Right cardiac atrium (tissue), 5 donors: ENCODE measurements at regions of chr22 and their contacts with region 1.

Region 1: DNA sequence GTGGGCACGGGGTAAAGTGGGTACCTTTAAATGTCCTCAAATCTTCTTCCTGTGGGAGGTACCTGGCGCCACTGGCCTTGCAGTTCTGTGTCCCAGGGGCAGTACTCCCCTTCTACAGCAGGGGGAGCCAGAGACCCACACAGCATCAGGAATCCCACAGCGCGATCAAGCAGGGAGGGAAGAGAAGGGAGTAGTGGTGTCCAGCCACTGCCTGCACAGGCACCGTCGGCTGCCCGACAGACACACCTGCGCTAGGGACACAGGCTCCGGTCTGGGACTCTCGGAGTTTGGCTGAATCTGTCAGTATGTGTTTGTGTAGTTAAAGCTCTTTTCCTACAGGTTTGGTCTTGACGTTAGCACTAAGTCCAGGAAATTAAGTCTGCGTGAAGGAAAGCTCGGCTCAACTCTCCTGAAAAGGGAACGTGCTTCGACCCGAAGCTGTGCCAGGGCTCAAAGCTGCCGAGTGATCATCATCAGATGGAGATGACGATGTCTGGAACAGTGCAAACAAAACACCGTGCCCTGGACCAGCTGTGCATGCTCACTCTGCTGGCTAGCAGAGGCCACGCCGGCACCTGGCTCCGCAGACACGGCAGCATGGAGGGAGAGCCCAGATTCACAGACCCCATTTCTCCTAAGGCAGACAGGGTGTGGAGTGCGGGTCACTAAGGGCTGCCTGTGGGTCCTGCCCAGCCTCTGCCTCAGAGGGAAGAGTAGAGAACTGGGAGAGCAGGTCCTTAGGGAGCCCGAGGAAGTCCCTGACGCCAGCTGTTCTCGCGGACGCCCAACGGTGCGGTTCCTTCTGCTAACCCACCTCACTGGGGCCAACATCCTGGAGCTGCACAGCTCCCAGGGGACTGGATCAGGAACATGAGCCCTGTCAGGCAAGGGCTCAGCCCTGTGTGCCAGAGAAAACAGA is 56.0 kb upstream of the BID start:
- DNase-seq: peak; percentile 81 to 94 (median 90)
- ATAC-seq: peak; percentile 78 to 79
- H3K4me3 ChIP-seq: no peak overlapping the region
- H3K27ac ChIP-seq: no peak overlapping the region
- H3K4me1 ChIP-seq: peaks cover 4% of the 10 kb centered on the region
- H3K27me3 ChIP-seq: no peaks in the 10 kb centered on the region

Region 2: DNA sequence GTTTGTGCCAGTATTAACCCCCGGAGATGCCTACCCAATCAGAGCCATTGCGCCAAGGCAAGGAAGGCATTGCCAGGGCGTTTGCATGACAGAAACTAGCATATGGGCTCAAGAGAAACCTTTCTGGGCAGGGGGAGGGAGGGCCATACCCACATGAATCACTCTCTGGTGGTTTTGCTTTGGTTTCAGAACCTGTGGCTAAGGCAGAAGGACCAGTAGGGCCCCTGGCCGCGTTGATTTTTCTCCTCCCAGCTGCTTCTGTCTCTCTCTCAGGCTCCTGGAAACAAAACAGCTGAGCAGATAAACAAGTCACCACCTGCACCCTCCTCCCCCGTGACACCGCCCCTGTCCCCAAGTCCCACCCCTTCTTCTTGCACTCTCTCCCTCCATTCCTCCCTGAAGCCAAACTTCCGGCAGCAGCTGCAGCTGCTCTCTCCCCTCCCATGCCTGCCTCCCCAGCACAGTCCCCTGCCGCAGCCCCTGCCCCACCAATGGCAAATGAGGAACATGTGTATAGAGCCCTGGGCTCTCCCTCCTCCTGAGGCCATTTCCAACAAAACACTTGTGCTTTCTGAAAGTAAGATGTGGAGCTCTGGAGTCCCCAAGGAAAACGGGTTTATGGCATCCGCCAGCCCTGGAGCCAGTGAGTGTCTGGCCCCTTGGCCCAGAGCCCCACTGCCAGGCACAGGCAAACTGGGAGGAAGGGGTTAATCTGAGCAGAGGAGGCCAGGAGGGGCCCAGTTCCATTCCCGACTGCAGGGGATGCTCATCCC is 572.1 kb before region 1 on chr22:
- intact Hi-C with region 1: no loop called
- DNase-seq: peak in 1 of 3 donors; percentile 65
- ATAC-seq: peak; percentile 49 to 73
- H3K4me3 ChIP-seq: no peak overlapping the region
- H3K27ac ChIP-seq: no peak overlapping the region
- H3K4me1 ChIP-seq: no peaks in the 10 kb centered on the region
- H3K27me3 ChIP-seq: no peaks in the 10 kb centered on the region

Region 3: GRCh38 chr22:17891481-17892167 is 61.3 kb after region 1 on chr22:
- intact Hi-C with region 1: loop called (anchors 2 to 10 kb)
- DNase-seq: peak; percentile 45 to 84 (median 80)
- ATAC-seq: peak; percentile 61 to 79
- H3K4me3 ChIP-seq: no peak overlapping the region
- H3K27ac ChIP-seq: peak overlapping the region; percentile 82
- H3K4me1 ChIP-seq: no peaks in the 10 kb centered on the region
- H3K27me3 ChIP-seq: no peaks in the 10 kb centered on the region

Region 4: DNA sequence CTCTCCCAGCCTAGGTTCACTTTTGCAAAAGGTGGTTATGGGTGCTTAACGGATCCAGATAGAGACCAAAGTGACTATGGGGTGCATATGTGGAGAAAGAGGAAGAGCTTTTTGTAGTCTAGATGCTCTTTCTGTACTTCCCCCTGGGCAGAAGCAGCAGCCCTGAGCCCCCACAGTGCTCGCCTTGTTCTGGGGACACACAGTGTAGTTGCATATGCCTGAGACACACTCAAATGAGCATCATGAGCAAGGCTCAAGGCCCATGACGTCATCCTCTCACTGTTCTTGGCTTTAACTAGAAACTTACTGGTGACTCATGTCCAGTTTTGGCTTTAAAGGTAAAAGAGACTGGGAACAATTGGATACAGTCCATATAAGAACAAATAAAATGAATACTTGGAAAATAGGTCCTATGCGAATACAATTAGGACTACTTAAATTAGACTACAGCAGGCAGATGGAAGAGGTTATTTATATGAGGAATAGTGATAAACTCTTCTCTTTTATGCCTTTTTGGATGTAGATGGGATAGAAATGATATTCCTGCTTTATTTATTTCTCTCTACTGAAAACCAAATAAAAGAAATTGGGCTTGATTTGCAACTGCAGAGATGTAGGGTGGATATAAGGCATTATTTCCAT is 227.4 kb after region 1 on chr22:
- intact Hi-C with region 1: no loop called
- DNase-seq: peak in 2 of 3 donors; percentile 83 to 85
- ATAC-seq: peak; percentile 81 to 84
- H3K4me3 ChIP-seq: no peak overlapping the region
- H3K27ac ChIP-seq: no peak overlapping the region
- H3K4me1 ChIP-seq: peaks cover 8% of the 10 kb centered on the region
- H3K27me3 ChIP-seq: no peaks in the 10 kb centered on the region

Region 5: DNA sequence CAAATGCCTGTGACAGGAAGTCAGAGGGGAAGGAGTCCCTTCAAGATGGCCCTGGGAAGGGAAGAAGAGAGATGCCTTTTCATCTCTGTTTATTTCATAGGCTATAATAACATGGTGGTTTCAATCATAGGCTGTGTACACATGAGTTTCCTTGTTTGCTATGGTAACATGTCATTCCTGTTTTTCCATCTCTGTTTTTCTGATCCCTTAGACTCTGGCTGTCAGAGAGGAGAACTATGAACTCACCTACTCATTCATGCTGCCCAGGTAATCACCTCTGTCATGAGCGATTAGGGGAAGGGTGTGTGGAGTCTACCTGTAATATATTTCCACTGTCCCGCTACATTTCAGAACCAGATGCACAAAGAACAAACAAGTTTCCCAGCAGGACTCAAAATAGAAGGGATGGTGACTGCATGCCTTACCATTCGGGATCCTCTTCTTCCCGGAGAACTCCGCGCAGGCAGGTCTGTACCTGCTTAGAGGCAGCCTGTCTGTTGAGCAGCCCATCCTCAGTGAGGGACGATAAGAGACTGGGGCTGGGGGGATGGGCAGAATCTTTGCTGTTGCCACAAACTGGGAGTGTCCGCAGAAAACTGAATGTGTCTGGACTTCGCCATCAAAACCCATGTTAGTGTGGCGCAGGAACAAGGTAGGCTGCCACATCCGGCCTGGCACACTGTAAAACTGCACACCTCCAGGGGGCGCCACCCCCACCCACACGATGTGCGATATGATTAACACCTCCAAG is 240.4 kb after region 1 on chr22:
- intact Hi-C with region 1: loop called in 2 of 4 experiments (anchors 5 kb)
- DNase-seq: peak in 1 of 3 donors; percentile 26
- ATAC-seq: no peak
- H3K4me3 ChIP-seq: no peak overlapping the region
- H3K27ac ChIP-seq: no peak overlapping the region
- H3K4me1 ChIP-seq: no peaks in the 10 kb centered on the region
- H3K27me3 ChIP-seq: no peaks in the 10 kb centered on the region